ENCODE measurements at regions of chrX and their contacts with region 1.

Region 1: DNA sequence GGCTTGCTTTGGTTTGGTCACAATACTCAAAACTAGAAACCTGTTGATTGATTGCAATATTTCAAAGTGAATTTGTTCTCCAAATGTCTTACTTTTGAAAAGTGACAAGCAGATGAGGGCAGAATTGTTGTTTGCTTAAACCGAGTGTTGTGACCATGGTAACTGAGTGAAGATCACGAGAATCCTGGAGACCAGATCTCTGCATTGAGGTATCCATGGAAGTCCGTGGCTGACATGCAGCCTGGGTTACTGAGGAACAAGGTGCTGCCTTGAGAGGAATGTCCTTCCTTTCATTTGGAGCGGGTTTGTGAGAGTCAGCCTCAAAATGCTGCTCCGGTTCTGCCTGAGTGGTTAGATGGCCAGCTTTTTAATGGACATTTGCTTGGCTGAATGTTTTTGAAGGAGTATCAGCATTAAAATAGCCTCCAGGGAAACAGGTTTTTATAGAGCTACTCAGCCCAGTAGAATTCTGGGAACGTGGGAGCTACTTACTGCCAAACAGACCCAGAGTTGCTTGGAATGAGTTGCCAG is 31.3 kb downstream of the NYX start:
- DNase-seq: no peak
- H3K4me3 Mint-ChIP-seq: no peak overlapping the region
- H3K27ac Mint-ChIP-seq: no peak overlapping the region
- H3K4me1 Mint-ChIP-seq: peaks cover 3% of the 10 kb centered on the region
- H3K27me3 Mint-ChIP-seq: no peaks in the 10 kb centered on the region

Region 2: DNA sequence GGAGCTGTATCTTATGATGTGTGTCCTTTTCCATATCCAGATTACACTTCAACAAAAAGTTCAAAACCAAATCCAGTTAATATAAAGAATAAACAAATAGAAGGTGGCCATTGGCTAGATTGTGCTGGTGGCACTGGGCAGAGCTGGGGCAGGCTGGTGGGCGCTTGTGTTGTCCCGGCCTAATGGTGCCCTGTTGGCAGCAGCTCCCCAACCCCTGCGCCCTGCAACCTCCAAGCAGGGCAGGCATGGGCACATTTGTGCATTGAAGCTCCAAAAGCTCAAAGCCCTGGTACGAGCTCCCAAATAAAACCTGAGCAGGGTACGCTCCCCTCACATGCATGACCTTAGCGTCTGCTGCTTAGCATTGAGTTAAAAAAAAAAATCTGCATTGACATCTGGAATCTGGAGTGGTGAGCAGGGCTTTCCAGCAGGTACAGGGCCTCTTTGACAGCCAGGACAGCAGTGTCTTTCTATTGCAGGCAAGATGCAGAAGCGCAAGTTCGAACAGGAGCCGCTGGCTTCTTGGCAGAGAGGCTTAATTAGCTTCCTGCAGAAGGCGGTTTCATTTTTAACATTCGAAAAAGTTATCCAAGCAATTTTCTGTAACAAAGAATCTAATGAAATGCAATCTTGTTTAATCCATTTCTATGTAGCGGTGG is 57.2 kb before region 1 on chrX:
- intact Hi-C with region 1: no loop called
- DNase-seq: no peak
- H3K4me3 Mint-ChIP-seq: peak overlapping the region; percentile 26
- H3K27ac Mint-ChIP-seq: no peak overlapping the region
- H3K4me1 Mint-ChIP-seq: no peaks in the 10 kb centered on the region
- H3K27me3 Mint-ChIP-seq: no peaks in the 10 kb centered on the region

Region 3: GRCh38 chrX:41512394-41512793 is 33.9 kb after region 1 on chrX:
- intact Hi-C with region 1: loop called (anchors 2 kb)
- DNase-seq: peak; percentile 32
- H3K4me3 Mint-ChIP-seq: peak overlapping the region; percentile 16
- H3K27ac Mint-ChIP-seq: peak overlapping the region; percentile 88
- H3K4me1 Mint-ChIP-seq: peaks cover 40% of the 10 kb centered on the region
- H3K27me3 Mint-ChIP-seq: no peaks in the 10 kb centered on the region